HCT116 (cell line): ENCODE measurements at regions of chr15 and their contacts with region 1.

Region 1: DNA sequence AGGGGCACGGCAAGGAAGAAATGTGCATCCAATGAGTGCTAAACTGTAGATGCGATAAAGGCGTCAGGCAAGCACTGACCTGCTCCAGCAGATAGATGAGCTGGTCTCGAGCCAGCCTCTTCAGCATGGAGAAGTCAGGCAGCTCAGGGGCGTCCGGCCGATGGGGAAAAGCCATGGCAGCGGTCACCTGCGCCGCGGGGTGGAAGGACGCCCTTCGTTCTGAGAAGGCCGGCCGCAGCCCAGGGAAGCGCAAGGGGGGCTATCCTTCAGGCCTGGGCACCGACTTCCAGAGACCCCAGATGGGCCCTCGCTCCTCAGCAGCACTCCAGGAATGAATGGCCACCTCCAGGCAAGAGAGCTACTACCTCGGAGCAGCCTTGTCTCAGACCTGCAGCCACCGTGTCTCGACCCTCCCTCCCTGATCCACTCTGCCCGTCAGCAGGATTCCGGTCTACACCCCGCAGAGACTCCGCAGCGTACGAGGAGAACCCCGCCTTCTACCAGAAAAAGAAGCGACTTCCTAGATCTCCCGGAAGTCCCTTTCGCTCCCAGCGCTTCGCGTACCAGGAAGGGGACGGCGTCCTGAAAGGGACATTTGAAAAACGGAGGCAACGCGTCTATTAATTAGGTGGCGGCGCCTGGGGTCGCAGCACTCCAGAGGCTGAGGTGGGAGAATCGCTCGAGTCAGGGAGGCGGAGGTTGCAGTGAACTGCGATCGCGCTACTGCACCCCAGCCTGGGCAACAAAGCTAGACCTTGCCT is at the start of gene VPS33B:
- DNase-seq: peak; percentile 81
- ATAC-seq: peak; percentile 92
- H3K4me3 ChIP-seq: peak within 1 kb of the TSS; percentile 78 to 83
- H3K27ac ChIP-seq: peak within 1 kb of the TSS; percentile 60
- H3K4me1 ChIP-seq: peaks cover 4 to 21% of the 10 kb centered on the region in 2 experiments; a peak in 3 of 4 replicates
- H3K27me3 ChIP-seq: no peaks in the 10 kb centered on the region
- CTCF ChIP-seq: no peak
- POLR2A ChIP-seq: no peak
- RAD21 ChIP-seq: no peak
- total RNA-seq, gene VPS33B: 23.1 TPM

Region 2: DNA sequence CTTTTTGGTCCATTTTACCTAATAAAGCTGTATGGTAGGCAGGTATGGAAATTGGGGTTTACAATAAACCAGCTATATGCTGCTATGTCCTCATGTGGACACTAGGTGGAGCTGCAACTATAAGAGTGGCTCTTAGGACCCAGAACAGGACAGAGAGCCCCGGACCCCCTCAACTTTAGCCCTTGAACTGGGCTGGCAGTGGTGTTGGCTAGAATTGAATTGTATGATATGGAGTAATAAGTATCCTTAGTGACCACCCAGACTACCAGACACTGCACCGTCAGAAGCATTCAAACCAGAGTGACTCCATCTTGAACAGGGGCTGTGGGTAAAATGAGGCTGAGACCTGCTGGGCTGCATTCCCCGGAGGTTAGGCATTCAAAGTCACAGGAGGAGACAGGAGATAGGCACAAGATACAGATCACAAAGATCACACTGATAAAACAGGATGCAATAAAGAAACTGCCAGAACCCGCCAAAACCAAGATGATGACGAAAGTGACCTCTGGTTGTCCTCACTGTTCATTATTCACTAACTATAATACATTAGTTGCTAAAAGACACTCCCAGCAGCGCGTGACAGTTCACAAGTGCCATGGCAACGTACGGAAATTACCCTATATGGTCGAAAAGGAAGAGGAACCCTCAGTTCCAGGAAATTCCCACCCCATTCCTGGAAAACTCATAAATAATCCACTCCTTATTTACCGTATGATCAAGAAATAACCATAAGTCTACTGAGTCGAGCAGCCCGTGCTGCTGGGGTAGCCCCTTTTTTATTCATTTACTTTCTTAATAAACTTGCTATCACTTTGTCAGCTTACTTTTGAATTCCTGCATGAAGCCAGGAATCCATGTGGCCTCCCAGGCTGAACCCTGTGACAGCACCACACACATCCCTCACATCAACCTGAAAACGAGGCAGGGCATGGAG is 373.9 kb before region 1 on chr15:
- CTCF ChIA-PET with region 1: no interaction called
- POLR2A ChIA-PET with region 1: no interaction called
- RAD21 ChIA-PET with region 1: no interaction called
- intact Hi-C with region 1: no loop called
- DNase-seq: peak; percentile 48
- ATAC-seq: peak; percentile 81
- H3K4me3 ChIP-seq: no peak overlapping the region
- H3K27ac ChIP-seq: no peak overlapping the region
- H3K4me1 ChIP-seq: peaks cover 0 to 23% of the 10 kb centered on the region in 2 experiments; a peak in 3 of 4 replicates
- H3K27me3 ChIP-seq: no peaks in the 10 kb centered on the region
- CTCF ChIP-seq: peak; percentile 82 to 91 (median 87)
- POLR2A ChIP-seq: no peak
- RAD21 ChIP-seq: peak; percentile 96

Region 3: DNA sequence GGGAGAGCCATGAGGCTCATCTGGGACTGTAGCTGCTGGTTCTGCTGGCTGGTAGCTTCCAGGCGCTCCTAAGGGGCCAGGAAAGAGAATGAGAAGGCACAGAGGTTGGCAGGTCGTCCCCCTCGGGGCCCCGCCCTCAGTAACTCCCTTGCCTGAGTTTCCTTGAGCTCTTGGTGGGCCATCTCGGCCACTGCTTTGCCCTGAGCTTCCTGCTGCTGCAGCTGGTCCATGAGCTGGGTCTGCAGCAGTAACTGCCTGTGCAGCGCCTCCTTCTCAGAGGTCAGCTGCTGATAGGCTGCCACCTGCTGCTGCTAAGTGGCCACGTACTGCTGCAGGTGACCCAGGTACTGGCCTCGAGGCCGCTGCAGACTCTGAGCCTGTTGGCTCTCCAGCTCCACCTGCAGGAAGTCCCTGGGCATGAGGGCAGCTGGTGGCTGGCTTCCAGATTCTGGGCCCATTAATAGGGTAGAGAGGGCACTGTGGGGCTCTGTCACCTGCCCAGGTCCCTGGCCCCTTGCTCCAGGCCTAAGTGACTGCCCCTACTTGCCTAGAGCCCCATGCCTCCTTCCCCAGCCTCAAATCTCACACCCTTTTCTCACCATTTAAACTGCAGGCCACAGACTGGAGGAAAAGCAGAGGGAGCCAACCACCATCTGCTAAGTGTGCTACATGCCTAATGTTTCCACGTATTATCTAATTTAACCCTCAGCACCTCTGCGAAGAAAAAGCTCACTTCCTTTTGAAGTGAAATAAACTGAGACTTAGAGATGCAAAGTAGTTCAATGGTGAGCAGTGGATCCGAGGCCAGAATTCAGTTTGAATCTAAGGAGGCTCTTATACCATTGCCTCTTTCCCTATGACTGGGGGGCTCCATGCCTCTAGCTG is 10.9 kb after region 1 on chr15:
- CTCF ChIA-PET with region 1: interaction called, 21 read pairs
- POLR2A ChIA-PET with region 1: interaction called, 4 read pairs
- RAD21 ChIA-PET with region 1: no interaction called
- intact Hi-C with region 1: no loop called
- DNase-seq: peak; percentile 83
- ATAC-seq: peak; percentile 97
- H3K4me3 ChIP-seq: no peak overlapping the region
- H3K27ac ChIP-seq: no peak overlapping the region
- H3K4me1 ChIP-seq: peaks cover 0 to 9% of the 10 kb centered on the region in 2 experiments; a peak in 1 of 4 replicates
- H3K27me3 ChIP-seq: no peaks in the 10 kb centered on the region
- CTCF ChIP-seq: peak; percentile 76 to 97 (median 92)
- POLR2A ChIP-seq: no peak
- RAD21 ChIP-seq: peak; percentile 80

Region 4: GRCh38 chr15:91400481-91400880 is 378.2 kb after region 1 on chr15:
- CTCF ChIA-PET with region 1: no interaction called
- POLR2A ChIA-PET with region 1: no interaction called
- RAD21 ChIA-PET with region 1: no interaction called
- intact Hi-C with region 1: no loop called
- DNase-seq: no peak
- ATAC-seq: no peak
- H3K4me3 ChIP-seq: no peak overlapping the region
- H3K27ac ChIP-seq: no peak overlapping the region
- H3K4me1 ChIP-seq: no peaks in the 10 kb centered on the region
- H3K27me3 ChIP-seq: no peaks in the 10 kb centered on the region
- CTCF ChIP-seq: no peak
- POLR2A ChIP-seq: no peak
- RAD21 ChIP-seq: no peak